ENCODE measurements at regions of chr22 and their contacts with region 1.

Region 1: DNA sequence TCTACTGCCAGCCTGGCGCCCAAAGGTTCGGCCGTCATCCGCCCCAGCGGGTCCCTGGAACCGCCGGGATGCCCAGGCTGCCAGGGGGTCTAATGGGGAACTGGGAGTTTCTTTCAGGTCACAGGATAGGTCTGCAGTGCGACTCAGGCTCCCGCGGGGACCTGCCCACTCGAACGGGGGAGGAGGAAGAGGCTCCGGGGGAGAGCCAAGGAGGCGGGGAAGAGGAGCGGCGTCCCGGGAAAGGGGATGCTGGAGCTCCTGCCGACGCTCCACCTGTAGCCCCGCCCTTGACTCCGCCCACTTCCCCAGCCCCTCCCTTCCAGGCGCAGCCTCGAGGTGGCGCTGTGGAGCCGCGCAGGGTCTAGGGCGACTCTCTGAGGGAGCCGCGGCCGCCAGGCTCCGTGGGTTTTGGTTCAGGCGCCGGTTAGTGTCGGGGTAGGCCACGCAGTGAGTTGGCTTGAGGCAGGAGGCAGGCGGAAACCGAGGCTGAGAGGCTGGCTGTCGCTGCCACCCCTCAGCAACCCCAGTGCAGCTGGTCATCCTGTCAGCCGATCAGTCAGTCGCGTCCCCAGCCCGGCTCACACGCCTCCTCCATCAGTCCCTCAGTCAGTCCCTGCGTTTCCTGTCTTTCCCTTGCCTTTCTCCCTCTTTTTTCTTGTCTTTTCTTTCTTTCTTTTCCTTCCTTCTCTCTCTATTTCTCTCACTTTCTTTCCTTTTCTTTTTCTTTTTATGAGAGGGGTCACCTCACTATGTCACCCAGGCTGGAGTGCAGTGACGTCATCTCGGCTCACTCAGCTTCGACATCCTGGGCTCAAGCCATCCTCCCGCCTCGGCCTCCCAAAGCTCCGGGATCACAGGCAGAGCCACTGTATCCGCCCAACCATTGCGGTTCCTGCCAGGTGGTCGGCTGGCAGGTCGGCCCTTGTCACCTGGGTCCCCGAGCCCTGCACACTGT is 26.4 kb downstream of the YWHAH start:
- DNase-seq: peak; percentile 83 to 96
- ATAC-seq: peak; percentile 94
- H3K4me3 ChIP-seq: no peak overlapping the region
- H3K27ac ChIP-seq: no peak overlapping the region
- H3K4me1 ChIP-seq: no peaks in the 10 kb centered on the region
- H3K27me3 ChIP-seq: no peaks in the 10 kb centered on the region

Region 2: GRCh38 chr22:31901388-31902137 is 69.2 kb before region 1 on chr22:
- intact Hi-C with region 1: loop called in 1 of 2 experiments (anchors 10 kb)
- DNase-seq: peak in 1 of 2 donors; percentile 0
- ATAC-seq: no peak
- H3K4me3 ChIP-seq: no peak overlapping the region
- H3K27ac ChIP-seq: no peak overlapping the region
- H3K4me1 ChIP-seq: no peaks in the 10 kb centered on the region
- H3K27me3 ChIP-seq: no peaks in the 10 kb centered on the region

Region 3: GRCh38 chr22:31943976-31944699 is 26.6 kb before region 1 on chr22 and contains the start of gene YWHAH:
- intact Hi-C with region 1: loop called in 1 of 2 experiments (anchors 2 kb)
- DNase-seq: peak; percentile 97 to 99
- ATAC-seq: peak; percentile 97
- H3K4me3 ChIP-seq: peak within 1 kb of the TSS; percentile 68 to 93
- H3K27ac ChIP-seq: peak within 1 kb of the TSS; percentile 83 to 94
- H3K4me1 ChIP-seq: peaks cover 0 to 3% of the 10 kb centered on the region in 2 donors
- H3K27me3 ChIP-seq: no peaks in the 10 kb centered on the region
- total RNA-seq, gene YWHAH: 207 to 538 TPM

Region 4: DNA sequence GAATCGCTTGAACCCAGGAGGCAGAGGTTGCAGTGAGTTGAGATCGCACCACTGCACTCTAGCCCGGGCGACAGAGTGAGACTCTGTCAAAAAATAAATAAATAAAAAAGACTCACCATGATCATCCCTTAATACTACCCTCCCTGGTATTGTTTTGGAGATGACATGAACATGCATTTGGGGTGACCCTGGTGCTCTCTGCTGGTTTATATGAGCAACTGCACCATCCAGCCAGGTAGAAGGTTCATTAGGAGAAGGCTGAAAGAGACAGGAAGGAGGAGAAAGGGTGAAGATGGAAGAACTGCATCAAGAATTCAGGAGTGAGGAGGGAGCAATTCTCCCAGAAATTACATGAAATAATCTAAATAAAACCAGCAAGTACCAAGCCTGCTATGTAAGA is 110.1 kb after region 1 on chr22:
- intact Hi-C with region 1: loop called in 1 of 2 experiments (anchors 10 kb)
- DNase-seq: no peak
- ATAC-seq: no peak
- H3K4me3 ChIP-seq: no peak overlapping the region
- H3K27ac ChIP-seq: no peak overlapping the region
- H3K4me1 ChIP-seq: no peaks in the 10 kb centered on the region
- H3K27me3 ChIP-seq: no peaks in the 10 kb centered on the region

Region 5: DNA sequence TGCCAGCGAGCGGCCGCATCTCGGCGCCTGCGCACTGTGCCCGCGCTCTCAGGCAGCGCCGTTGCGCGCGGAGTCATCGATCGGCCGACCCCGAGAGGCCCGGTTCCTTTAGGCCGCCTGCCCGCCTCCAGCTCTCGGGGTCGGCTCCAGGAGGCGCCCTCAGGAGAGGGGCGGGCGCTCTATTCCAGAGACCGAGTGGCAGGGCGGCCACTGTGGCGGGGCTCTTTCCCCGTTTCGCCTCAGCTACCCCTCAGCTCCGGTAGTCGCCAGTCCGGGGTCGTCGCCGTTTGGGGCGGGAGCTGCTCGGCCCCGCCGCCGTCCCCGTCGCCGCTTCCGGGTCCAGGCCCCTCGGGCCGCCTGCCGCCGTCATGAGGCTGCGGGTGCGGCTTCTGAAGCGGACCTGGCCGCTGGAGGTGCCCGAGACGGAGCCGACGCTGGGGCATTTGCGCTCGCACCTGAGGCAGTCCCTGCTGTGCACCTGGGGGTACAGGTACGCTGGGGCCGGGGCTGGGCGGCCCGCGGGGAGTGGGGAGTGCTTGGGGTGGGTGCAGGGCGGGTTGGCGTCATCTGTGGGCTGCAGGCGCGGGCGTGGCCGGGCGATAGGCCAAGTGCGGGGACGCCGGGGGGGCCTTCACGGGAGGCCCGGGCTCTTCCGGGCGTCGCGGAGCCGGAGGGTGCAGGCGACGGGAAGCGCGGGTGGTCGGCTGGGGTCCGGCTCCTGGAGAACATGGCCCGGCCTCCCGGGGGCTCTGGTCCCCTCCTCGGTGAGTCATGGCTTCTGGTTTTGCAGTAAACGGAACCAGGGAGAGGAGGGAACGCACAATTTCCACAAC is 504.1 kb after region 1 on chr22 and contains the start of gene FBXO7:
- intact Hi-C with region 1: loop called (anchors 5 to 10 kb)
- DNase-seq: peak; percentile 95 to 98
- ATAC-seq: peak; percentile 95
- H3K4me3 ChIP-seq: peak within 1 kb of the TSS; percentile 54 to 94
- H3K27ac ChIP-seq: peak within 1 kb of the TSS; percentile 49 to 98
- H3K4me1 ChIP-seq: no peaks in the 10 kb centered on the region
- H3K27me3 ChIP-seq: no peaks in the 10 kb centered on the region
- total RNA-seq, gene FBXO7: 71.9 to 73.1 TPM